Upper lobe of right lung (tissue), 1 donor: ENCODE measurements at regions of chr5 and their contacts with region 1.

Region 1: GRCh38 chr5:42950440-42951292 is 89.5 kb downstream of the ANXA2R start:
- DNase-seq: peak; percentile 71
- ATAC-seq: peak; percentile 91
- H3K4me3 ChIP-seq: peak overlapping the region; percentile 56
- H3K27ac ChIP-seq: peak overlapping the region; percentile 91
- H3K4me1 ChIP-seq: peaks cover 17% of the 10 kb centered on the region
- H3K27me3 ChIP-seq: peaks cover 90% of the 10 kb centered on the region
- CTCF ChIP-seq: no peak

Region 2: GRCh38 chr5:42985129-42986037 is 34.7 kb after region 1 on chr5:
- intact Hi-C with region 1: loop called (anchors 5 kb)
- DNase-seq: no peak
- ATAC-seq: no peak
- H3K4me3 ChIP-seq: no peak overlapping the region
- H3K27ac ChIP-seq: no peak overlapping the region
- H3K4me1 ChIP-seq: no peaks in the 10 kb centered on the region
- H3K27me3 ChIP-seq: peaks cover 8% of the 10 kb centered on the region
- CTCF ChIP-seq: no peak

Region 3: GRCh38 chr5:43231977-43232376 is 281.3 kb after region 1 on chr5:
- intact Hi-C with region 1: no loop called
- DNase-seq: no peak
- ATAC-seq: peak; percentile 43
- H3K4me3 ChIP-seq: no peak overlapping the region
- H3K27ac ChIP-seq: no peak overlapping the region
- H3K4me1 ChIP-seq: no peaks in the 10 kb centered on the region
- H3K27me3 ChIP-seq: no peaks in the 10 kb centered on the region
- CTCF ChIP-seq: peak; percentile 23